ENCODE measurements at regions of chr16 and their contacts with region 1.

Region 1: GRCh38 chr16:83926726-83927397 is 26.2 kb upstream of the OSGIN1 start:
- H3K4me3 ChIP-seq: peak overlapping the region; percentile 29
- H3K27ac ChIP-seq: no peak overlapping the region
- H3K4me1 ChIP-seq: no peaks in the 10 kb centered on the region
- CTCF ChIP-seq: peak; percentile 94

Region 2: GRCh38 chr16:83863682-83864081 is 63.2 kb before region 1 on chr16:
- CTCF ChIA-PET with region 1: no interaction called
- POLR2A ChIA-PET with region 1: no interaction called
- H3K4me3 ChIP-seq: no peak overlapping the region
- H3K27ac ChIP-seq: no peak overlapping the region
- H3K4me1 ChIP-seq: no peaks in the 10 kb centered on the region
- CTCF ChIP-seq: no peak

Region 3: DNA sequence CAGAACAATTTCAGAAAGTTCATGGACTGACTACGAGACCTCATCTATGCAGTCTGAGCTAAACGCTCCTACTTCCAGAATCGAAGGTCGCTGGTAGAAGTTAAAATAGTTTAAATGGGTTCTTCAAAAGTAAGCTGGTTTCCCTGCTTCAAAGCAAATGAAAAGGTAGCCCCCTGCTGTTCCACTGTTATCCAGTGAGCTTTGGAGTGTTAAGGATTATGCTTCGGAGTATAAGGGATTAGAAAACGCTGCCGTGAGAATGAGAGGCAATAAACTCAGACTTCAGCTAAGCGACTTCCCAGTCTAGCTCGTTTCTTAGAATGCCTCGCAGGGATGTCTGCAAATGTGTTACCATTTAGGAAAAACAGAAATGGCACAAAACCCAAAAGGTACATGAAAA is 15.6 kb before region 1 on chr16:
- CTCF ChIA-PET with region 1: interaction called, 10 read pairs
- POLR2A ChIA-PET with region 1: interaction called, 3 read pairs
- H3K4me3 ChIP-seq: no peak overlapping the region
- H3K27ac ChIP-seq: no peak overlapping the region
- H3K4me1 ChIP-seq: no peaks in the 10 kb centered on the region
- CTCF ChIP-seq: no peak

Region 4: DNA sequence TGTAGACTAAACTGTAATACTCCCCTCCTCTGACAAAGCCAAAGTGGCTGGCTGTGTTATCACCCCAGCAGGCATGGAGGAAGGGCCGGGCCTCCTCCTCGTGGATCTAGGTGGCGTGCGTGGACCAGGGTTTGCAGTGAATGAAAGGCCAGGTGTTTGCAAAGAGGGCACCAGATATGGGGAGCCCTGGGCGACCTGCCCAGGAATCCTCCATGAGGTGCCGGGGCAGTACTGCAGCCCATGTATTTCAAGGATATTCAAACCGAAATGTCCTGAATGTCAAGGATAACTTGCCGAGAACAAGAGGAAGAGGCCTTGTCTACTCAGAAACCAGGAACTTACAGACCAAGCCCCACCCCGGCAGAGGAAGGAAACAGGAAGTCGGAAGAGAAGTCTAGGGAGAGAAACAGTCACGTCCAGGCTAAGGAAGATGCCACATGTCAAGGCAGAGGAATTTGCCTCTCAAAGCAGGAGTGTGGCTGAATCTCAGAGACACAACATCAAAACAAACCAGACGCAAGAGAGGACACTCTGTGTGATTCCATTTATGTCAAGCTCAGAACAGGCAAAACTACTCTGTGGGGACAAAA is 12.5 kb after region 1 on chr16:
- CTCF ChIA-PET with region 1: interaction called, 29 read pairs
- POLR2A ChIA-PET with region 1: no interaction called
- H3K4me3 ChIP-seq: no peak overlapping the region
- H3K27ac ChIP-seq: no peak overlapping the region
- H3K4me1 ChIP-seq: no peaks in the 10 kb centered on the region; the same call in 1 of the 2 replicates
- CTCF ChIP-seq: no peak

Region 5: DNA sequence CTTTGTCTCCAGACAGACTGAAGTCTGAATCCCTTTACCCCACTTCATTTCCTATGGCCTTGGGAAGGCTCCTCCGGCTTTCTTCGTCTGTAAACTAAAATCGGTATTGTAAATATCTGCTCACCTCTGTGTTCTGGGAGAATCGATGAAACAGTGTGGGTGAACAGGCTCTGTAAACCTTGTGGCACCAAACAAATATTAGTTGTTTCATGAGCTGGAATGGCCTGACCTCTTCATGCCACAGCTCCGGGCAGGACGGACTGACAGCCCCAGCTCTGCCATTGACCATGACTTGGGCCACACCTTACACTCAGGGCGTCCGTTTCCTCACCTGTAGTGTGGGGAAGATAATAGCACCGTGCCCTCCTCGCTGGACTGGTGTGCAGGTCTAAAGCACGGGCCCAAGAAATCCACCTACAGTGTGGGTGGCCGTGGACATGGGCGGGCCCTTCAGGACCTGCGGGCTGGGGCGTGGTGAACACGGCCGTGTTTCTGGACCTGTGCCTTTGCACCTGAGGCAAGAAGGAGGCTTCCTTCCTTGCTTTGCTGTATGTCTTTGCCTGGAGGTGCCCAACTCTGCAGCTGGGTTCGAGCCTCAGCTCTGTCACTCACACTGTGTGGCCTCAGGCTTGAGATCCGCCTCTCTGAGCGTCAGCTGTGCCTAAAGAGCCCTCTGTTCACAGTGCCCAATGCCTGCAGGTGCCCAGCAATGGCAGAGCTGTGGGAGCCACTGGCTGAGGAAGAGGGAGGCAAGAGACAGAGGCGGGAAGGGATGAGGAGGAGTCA is 20.1 kb after region 1 on chr16:
- CTCF ChIA-PET with region 1: interaction called, 10 read pairs
- POLR2A ChIA-PET with region 1: interaction called, 3 read pairs
- H3K4me3 ChIP-seq: no peak overlapping the region
- H3K27ac ChIP-seq: no peak overlapping the region
- H3K4me1 ChIP-seq: no peaks in the 10 kb centered on the region
- CTCF ChIP-seq: no peak

Region 6: GRCh38 chr16:83995754-83996153 is 68.9 kb after region 1 on chr16:
- CTCF ChIA-PET with region 1: no interaction called
- POLR2A ChIA-PET with region 1: no interaction called
- H3K4me3 ChIP-seq: no peak overlapping the region
- H3K27ac ChIP-seq: no peak overlapping the region
- H3K4me1 ChIP-seq: no peaks in the 10 kb centered on the region
- CTCF ChIP-seq: no peak